ENCODE measurements at regions of chr7 and their contacts with region 1.

Region 1: GRCh38 chr7:107150375-107151073 is 18.3 kb upstream of the HBP1 start:
- DNase-seq: peak; percentile 79
- ATAC-seq: peak; percentile 50 to 72

Region 2: GRCh38 chr7:106598663-106599342 is 551.7 kb before region 1 on chr7:
- intact Hi-C with region 1: no loop called
- DNase-seq: peak; percentile 72
- ATAC-seq: peak; percentile 96 to 98

Region 3: GRCh38 chr7:106793015-106793975 is 357.2 kb before region 1 on chr7:
- intact Hi-C with region 1: loop called (anchors 2 to 10 kb)
- DNase-seq: no peak
- ATAC-seq: no peak

Region 4: DNA sequence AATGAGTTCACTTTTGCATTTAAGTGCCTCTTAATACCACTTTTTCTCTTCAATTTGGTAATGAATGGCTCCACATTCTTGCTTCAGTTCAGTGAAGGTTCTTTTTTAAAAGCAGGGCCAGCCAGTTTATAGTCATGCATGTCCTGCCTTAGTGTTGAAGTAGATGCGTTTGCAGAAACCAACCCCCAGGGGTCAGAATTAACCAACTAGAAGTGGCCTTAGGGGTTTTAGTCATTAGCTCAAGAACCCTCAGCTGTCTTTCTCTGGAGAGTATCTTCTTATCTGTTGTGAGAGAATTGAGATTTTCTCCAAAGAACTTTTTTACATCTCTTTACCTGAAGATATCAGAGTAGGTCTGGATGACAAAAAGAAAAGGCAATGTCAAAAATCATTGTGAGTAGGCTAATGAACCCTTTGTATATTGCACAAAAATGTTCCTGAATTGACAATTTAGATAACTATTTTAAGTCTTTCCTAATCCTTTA is 203.2 kb before region 1 on chr7:
- intact Hi-C with region 1: loop called (anchors 1 to 5 kb)
- DNase-seq: peak; percentile 40
- ATAC-seq: peak; percentile 91 to 93

Region 5: DNA sequence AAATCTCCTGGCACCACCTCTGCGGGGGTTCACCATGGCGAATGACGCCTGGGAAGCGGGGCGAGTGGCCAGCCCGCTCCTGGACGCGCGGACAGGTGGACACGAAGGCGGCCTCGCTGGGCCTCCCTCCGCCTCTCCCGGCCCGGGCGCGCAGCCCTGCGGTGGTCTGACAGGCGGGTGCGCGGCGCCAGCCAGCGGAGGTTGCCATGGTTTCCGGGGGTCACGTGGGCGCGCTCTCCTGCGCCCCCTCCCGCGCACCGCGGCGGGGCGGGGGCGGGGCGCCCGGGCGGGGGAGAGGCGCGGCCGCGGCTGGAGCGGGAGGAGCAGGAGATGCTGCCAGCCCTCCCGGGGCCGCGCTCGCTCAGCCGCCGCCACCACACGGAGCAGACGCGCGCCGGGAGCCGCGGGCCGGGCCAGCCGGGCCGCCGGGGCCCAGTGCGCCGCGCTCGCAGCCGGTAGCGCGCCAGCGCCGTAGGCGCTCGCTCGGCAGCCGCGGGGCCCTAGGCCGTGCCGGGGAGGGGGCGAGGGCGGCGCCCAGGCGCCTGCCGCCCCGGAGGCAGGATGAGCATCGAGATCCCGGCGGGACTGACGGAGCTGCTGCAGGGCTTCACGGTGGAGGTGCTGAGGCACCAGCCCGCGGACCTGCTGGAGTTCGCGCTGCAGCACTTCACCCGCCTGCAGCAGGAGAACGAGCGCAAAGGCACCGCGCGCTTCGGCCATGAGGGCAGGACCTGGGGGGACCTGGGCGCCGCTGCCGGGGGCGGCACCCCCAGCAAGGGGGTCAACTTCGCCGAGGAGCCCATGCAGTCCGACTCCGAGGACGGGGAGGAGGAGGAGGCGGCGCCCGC is 106.0 kb before region 1 on chr7 and contains the start of gene PRKAR2B:
- intact Hi-C with region 1: loop called in 1 of 2 experiments (anchors 5 kb)
- DNase-seq: peak; percentile 81
- ATAC-seq: peak; percentile 97
- total RNA-seq, gene PRKAR2B: 52.2 to 78.2 TPM